A673 (cell line): ENCODE measurements at regions of chr1 and their contacts with region 1.

Region 1: DNA sequence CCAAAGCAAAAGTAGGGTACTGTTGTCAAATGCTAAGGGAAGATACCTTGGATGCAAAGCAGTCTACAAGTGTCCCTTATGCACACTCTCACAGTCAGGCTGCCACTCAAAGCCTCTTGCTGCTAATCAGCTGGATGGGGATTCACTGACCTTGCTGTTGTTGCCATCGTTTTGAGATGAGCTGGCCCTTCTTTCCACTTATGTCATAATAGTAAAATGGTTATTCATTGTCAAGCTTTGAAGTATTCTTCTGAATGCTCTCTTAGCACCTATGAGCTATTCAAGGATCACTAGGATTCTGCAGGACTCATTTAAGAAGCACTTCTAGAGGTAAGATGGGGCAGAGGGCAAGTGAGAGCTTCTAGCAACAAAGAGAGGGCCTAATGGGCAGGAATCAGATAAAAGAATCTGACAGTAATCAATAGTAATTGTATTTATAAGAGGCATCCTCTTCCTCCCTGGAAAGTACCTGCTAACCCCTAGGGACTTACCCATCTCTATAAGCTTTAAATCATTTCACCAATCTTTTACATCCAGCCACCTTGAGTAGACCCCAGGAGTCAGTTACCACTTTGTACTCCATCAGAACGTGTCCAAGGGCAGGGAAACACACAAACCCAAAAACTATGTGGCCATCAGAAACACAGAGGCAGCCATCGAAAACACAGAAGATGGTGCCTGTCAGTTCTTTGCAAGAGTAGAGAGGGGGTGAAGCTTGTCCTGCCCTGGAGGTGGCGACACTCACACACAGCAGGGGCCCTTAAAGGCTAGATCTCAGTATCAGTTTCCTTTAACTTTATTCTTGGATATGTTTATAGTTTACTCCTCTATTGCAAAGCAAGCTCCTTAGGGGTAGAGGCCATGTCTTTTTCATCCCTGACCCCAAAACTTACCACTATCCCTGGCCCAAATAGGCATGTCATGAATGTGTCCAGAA is 103.7 kb upstream of the NFIA start:
- DNase-seq: peak; percentile 70
- H3K4me3 ChIP-seq: no peak overlapping the region
- H3K27ac ChIP-seq: no peak overlapping the region
- H3K4me1 ChIP-seq: no peaks in the 10 kb centered on the region
- H3K27me3 ChIP-seq: no peaks in the 10 kb centered on the region
- CTCF ChIP-seq: peak; percentile 80

Region 2: GRCh38 chr1:60535713-60536112 is 443.0 kb before region 1 on chr1:
- CTCF ChIA-PET with region 1: no interaction called
- POLR2A ChIA-PET with region 1: no interaction called
- intact Hi-C with region 1: no loop called
- DNase-seq: no peak
- H3K4me3 ChIP-seq: no peak overlapping the region
- H3K27ac ChIP-seq: no peak overlapping the region
- H3K4me1 ChIP-seq: no peaks in the 10 kb centered on the region
- H3K27me3 ChIP-seq: peaks cover 17% of the 10 kb centered on the region
- CTCF ChIP-seq: no peak

Region 3: DNA sequence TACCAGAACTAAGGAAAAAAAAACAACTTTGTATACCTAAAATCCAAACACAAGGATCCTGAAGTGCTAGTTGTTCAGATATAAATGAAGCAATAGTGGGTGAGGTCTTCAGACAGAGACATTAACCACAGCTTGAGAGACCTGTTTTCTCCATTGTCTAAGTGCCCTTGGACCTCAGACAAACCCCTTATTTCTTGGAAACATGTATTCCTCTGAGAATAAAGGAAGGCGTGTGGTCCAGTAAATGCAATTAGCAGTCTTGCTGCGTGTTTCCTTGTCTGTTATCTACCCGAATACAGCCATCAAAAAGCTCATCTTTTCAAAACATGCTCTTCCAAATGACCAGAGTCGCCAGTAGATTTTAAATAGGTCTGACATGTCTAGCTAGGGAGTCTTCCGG is 187.5 kb before region 1 on chr1:
- CTCF ChIA-PET with region 1: no interaction called
- POLR2A ChIA-PET with region 1: no interaction called
- intact Hi-C with region 1: no loop called
- DNase-seq: no peak
- H3K4me3 ChIP-seq: no peak overlapping the region
- H3K27ac ChIP-seq: no peak overlapping the region
- H3K4me1 ChIP-seq: no peaks in the 10 kb centered on the region
- H3K27me3 ChIP-seq: peaks cover 32% of the 10 kb centered on the region
- CTCF ChIP-seq: no peak

Region 4: DNA sequence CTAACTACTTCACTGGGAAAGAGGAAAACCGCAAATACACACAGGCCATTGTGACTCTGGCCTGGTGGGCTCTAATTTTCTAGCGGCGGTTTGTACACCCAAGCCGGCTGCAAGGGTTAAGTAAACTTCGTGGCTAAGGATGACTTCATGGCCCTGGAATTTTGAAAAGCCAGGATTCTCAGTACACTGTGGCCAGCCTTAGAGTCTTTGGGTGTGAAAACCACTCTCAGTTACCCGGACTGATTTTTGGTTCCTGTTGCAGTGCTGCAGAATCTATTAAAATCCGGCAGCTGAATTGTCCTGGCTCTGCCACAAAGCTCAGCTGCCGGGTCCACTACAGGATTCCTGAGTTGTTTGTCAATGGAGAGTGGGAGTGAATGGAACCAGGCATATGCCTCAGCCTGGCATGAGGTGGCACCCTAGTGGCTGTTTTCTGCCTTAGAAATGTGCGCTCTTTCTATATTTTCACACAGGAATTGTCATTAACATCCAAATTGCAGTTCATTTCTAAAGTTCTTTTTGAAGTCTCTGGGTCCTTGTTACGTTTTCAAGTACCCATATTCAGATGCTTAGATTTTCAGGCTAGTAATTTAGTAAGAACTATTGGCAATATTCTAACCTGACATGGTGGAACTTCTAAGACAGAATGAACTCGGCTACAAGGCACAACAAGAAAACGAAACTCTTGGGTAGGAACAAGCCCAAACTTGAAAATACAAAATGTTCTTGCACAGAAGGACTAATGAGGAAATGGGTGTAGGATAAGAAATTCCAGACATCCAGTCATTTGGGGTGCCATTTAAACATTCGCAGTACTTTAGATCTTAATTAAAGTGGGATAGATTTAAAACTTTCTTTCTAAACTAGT is 359.5 kb after region 1 on chr1:
- CTCF ChIA-PET with region 1: no interaction called
- POLR2A ChIA-PET with region 1: no interaction called
- intact Hi-C with region 1: loop called (anchors 10 kb)
- DNase-seq: peak; percentile 87
- H3K4me3 ChIP-seq: peak overlapping the region; percentile 33
- H3K27ac ChIP-seq: peak overlapping the region; percentile 69
- H3K4me1 ChIP-seq: peaks cover 39% of the 10 kb centered on the region
- H3K27me3 ChIP-seq: no peaks in the 10 kb centered on the region
- CTCF ChIP-seq: peak; percentile 86